ENCODE measurements at regions of chr5 and their contacts with region 1.

Region 1: GRCh38 chr5:170262061-170263045 is 29.6 kb downstream of the C5orf58 start:
- DNase-seq: peak; percentile 72
- H3K4me3 Mint-ChIP-seq: peak overlapping the region; percentile 53
- H3K27ac Mint-ChIP-seq: peak overlapping the region; percentile 95
- H3K4me1 Mint-ChIP-seq: peaks cover 84% of the 10 kb centered on the region
- H3K27me3 Mint-ChIP-seq: no peaks in the 10 kb centered on the region

Region 2: GRCh38 chr5:170195961-170196360 is 66.4 kb before region 1 on chr5:
- CTCF ChIA-PET with region 1: no interaction called
- POLR2A ChIA-PET with region 1: no interaction called
- DNase-seq: no peak
- H3K4me3 Mint-ChIP-seq: no peak overlapping the region
- H3K27ac Mint-ChIP-seq: no peak overlapping the region
- H3K4me1 Mint-ChIP-seq: no peaks in the 10 kb centered on the region
- H3K27me3 Mint-ChIP-seq: peaks cover 9% of the 10 kb centered on the region

Region 3: GRCh38 chr5:170247363-170247762 is 15.0 kb before region 1 on chr5:
- CTCF ChIA-PET with region 1: interaction called, 8 read pairs
- POLR2A ChIA-PET with region 1: interaction called, 10 read pairs
- DNase-seq: no peak
- H3K4me3 Mint-ChIP-seq: no peak overlapping the region
- H3K27ac Mint-ChIP-seq: no peak overlapping the region
- H3K4me1 Mint-ChIP-seq: peaks cover 23% of the 10 kb centered on the region
- H3K27me3 Mint-ChIP-seq: no peaks in the 10 kb centered on the region

Region 4: GRCh38 chr5:170278611-170279452 is 16.5 kb after region 1 on chr5:
- CTCF ChIA-PET with region 1: interaction called, 62 read pairs
- POLR2A ChIA-PET with region 1: interaction called, 1,149 read pairs
- DNase-seq: peak; percentile 94
- H3K4me3 Mint-ChIP-seq: peak overlapping the region; percentile 69
- H3K27ac Mint-ChIP-seq: peak overlapping the region; percentile 97
- H3K4me1 Mint-ChIP-seq: peaks cover 97% of the 10 kb centered on the region
- H3K27me3 Mint-ChIP-seq: no peaks in the 10 kb centered on the region

Region 5: GRCh38 chr5:170293273-170293672 is 30.9 kb after region 1 on chr5:
- CTCF ChIA-PET with region 1: interaction called, 371 read pairs
- POLR2A ChIA-PET with region 1: interaction called, 1,149 read pairs
- DNase-seq: peak; percentile 80
- H3K4me3 Mint-ChIP-seq: peak overlapping the region; percentile 99
- H3K27ac Mint-ChIP-seq: peak overlapping the region; percentile 96
- H3K4me1 Mint-ChIP-seq: peaks cover 70% of the 10 kb centered on the region
- H3K27me3 Mint-ChIP-seq: no peaks in the 10 kb centered on the region